ENCODE measurements at regions of chr7 and their contacts with region 1.

Region 1: GRCh38 chr7:7761340-7761980 is 43.1 kb upstream of the RPA3 start:
- DNase-seq: peak in 7 of 9 donors; percentile 25 to 59 (median 51)
- ATAC-seq: peak; percentile 45
- H3K4me3 ChIP-seq: peak overlapping the region; percentile 48
- H3K4me3 Mint-ChIP-seq: peak overlapping the region; percentile 69 to 99 (median 90)
- H3K27ac ChIP-seq: peak overlapping the region; percentile 76
- H3K27ac Mint-ChIP-seq: peak overlapping the region; percentile 88 to 99 (median 94)
- H3K4me1 ChIP-seq: peaks cover 8 to 31% of the 10 kb centered on the region in 2 donors
- H3K4me1 Mint-ChIP-seq: peaks cover 30 to 54% (median 51%) of the 10 kb centered on the region in 7 donors
- H3K27me3 ChIP-seq: no peaks in the 10 kb centered on the region
- H3K27me3 Mint-ChIP-seq: no peaks in the 10 kb centered on the region

Region 2: DNA sequence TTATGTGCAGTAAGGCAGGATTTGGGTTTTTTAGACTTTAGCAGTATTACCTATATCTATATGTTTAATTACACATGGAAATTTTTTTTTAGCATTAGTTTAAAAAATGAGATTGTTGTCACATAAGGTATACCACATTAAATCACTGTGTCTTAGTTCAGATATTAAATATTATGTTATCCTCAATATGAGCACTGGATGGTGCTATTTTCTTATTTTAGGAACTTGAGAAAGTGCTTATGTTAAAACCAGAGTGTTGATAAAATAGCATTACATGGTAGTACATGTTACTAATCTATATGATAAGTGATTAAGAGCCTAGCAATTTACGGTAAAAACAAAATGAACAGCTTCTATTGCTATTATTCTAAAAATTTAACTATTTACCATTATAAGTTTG is 166.0 kb before region 1 on chr7:
- CTCF ChIA-PET with region 1: interaction called, 8 read pairs
- POLR2A ChIA-PET with region 1: no interaction called
- intact Hi-C with region 1: loop called (anchors 1 to 2 kb)
- DNase-seq: peak in 6 of 9 donors; percentile 14 to 45 (median 36)
- ATAC-seq: peak; percentile 65
- H3K4me3 ChIP-seq: no peak overlapping the region
- H3K4me3 Mint-ChIP-seq: no peak overlapping the region
- H3K27ac ChIP-seq: no peak overlapping the region
- H3K27ac Mint-ChIP-seq: no peak overlapping the region
- H3K4me1 ChIP-seq: peaks cover 0 to 3% of the 10 kb centered on the region in 2 donors
- H3K4me1 Mint-ChIP-seq: no peaks in the 10 kb centered on the region
- H3K27me3 ChIP-seq: no peaks in the 10 kb centered on the region
- H3K27me3 Mint-ChIP-seq: no peaks in the 10 kb centered on the region

Region 3: GRCh38 chr7:7719236-7719635 is 42.2 kb before region 1 on chr7:
- CTCF ChIA-PET with region 1: no interaction called
- POLR2A ChIA-PET with region 1: no interaction called
- intact Hi-C with region 1: loop called in 1 of 2 experiments (anchors 2 kb)
- DNase-seq: peak in 8 of 9 donors; percentile 2 to 39 (median 24)
- ATAC-seq: peak; percentile 68
- H3K4me3 ChIP-seq: no peak overlapping the region
- H3K4me3 Mint-ChIP-seq: peak overlapping the region in 1 of 10 donors; percentile 37
- H3K27ac ChIP-seq: no peak overlapping the region
- H3K27ac Mint-ChIP-seq: peak overlapping the region in 4 of 9 donors; percentile 25 to 82 (median 50)
- H3K4me1 ChIP-seq: no peaks in the 10 kb centered on the region
- H3K4me1 Mint-ChIP-seq: peaks cover 3 to 20% (median 13%) of the 10 kb centered on the region in 7 donors
- H3K27me3 ChIP-seq: no peaks in the 10 kb centered on the region
- H3K27me3 Mint-ChIP-seq: no peaks in the 10 kb centered on the region

Region 4: GRCh38 chr7:7783001-7783400 is 21.5 kb after region 1 on chr7:
- CTCF ChIA-PET with region 1: no interaction called
- POLR2A ChIA-PET with region 1: no interaction called
- intact Hi-C with region 1: no loop called
- DNase-seq: no peak
- ATAC-seq: no peak
- H3K4me3 ChIP-seq: no peak overlapping the region
- H3K4me3 Mint-ChIP-seq: peak overlapping the region in 2 of 10 donors; percentile 27 to 45
- H3K27ac ChIP-seq: no peak overlapping the region
- H3K27ac Mint-ChIP-seq: no peak overlapping the region
- H3K4me1 ChIP-seq: no peaks in the 10 kb centered on the region
- H3K4me1 Mint-ChIP-seq: peaks cover 9 to 31% (median 18%) of the 10 kb centered on the region in 7 donors
- H3K27me3 ChIP-seq: no peaks in the 10 kb centered on the region
- H3K27me3 Mint-ChIP-seq: no peaks in the 10 kb centered on the region

Region 5: GRCh38 chr7:8035647-8036518 is 274.4 kb after region 1 on chr7:
- CTCF ChIA-PET with region 1: interaction called, 3 read pairs
- POLR2A ChIA-PET with region 1: no interaction called
- intact Hi-C with region 1: loop called in 1 of 2 experiments (anchors 1 kb)
- DNase-seq: peak in 7 of 9 donors; percentile 13 to 51 (median 36)
- ATAC-seq: peak; percentile 96
- H3K4me3 ChIP-seq: no peak overlapping the region
- H3K4me3 Mint-ChIP-seq: no peak overlapping the region
- H3K27ac ChIP-seq: no peak overlapping the region
- H3K27ac Mint-ChIP-seq: peak overlapping the region in 8 of 9 donors; percentile 21 to 83 (median 58)
- H3K4me1 ChIP-seq: peaks cover 5 to 6% of the 10 kb centered on the region in 2 donors
- H3K4me1 Mint-ChIP-seq: peaks cover 9 to 28% (median 19%) of the 10 kb centered on the region in 7 donors
- H3K27me3 ChIP-seq: no peaks in the 10 kb centered on the region
- H3K27me3 Mint-ChIP-seq: no peaks in the 10 kb centered on the region

Region 6: DNA sequence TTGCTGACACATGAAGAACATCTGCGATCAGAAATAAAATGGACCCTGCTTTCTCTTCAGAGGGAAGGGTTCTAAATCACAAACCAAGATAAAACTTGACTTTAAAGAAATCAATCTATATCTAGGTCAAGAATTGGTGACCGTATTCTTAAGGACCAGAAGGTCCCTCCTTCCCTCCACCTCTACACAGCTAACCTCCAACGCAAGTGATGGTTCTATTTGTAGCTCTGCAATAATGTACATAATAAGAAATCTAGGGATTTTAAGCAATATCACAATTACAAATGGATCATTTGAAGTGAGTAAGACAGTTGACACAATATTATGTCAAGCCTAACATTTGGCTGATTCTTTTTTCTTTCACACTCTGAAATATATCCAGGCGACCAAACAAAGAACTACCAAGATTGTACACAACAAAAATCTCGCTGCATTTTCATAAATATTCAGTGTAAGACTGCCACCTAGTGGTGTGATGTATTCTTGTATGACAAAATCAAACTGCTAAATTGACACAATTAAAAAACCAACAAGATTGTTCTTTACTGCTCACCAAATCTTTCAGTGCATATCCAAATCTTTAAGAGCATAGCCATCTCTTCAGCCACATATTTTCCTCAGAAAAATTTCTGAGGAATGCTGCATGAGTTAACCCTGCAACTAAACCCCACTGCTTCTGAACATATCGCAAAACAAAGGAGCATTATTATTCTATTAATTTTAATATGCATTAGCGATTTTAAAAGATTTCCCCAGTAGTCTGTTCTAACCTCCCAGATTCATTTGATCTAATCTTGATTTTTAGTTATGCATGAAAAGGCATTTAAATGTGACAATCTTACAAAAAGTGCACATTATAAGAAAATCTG is 456.0 kb after region 1 on chr7:
- CTCF ChIA-PET with region 1: interaction called, 3 read pairs
- POLR2A ChIA-PET with region 1: no interaction called
- intact Hi-C with region 1: loop called (anchors 1 kb)
- DNase-seq: peak in 7 of 9 donors; percentile 42 to 76 (median 68)
- ATAC-seq: peak; percentile 84
- H3K4me3 ChIP-seq: no peak overlapping the region
- H3K4me3 Mint-ChIP-seq: no peak overlapping the region
- H3K27ac ChIP-seq: no peak overlapping the region
- H3K27ac Mint-ChIP-seq: peak overlapping the region in 1 of 9 donors; percentile 22
- H3K4me1 ChIP-seq: no peaks in the 10 kb centered on the region
- H3K4me1 Mint-ChIP-seq: peaks cover 0 to 16% (median 3%) of the 10 kb centered on the region in 7 donors
- H3K27me3 ChIP-seq: no peaks in the 10 kb centered on the region
- H3K27me3 Mint-ChIP-seq: no peaks in the 10 kb centered on the region